ENCODE measurements at regions of chr3 and their contacts with region 1.

Region 1: GRCh38 chr3:56915966-56916586 is 114.3 kb upstream of the ARHGEF3 start:
- DNase-seq: peak; percentile 85
- H3K4me3 ChIP-seq: peak overlapping the region; percentile 73
- H3K27ac ChIP-seq: peak overlapping the region; percentile 97
- H3K4me1 ChIP-seq: peaks cover 66% of the 10 kb centered on the region
- CTCF ChIP-seq: peak; percentile 55

Region 2: GRCh38 chr3:56702490-56703315 is 213.4 kb before region 1 on chr3:
- CTCF ChIA-PET with region 1: no interaction called
- POLR2A ChIA-PET with region 1: interaction called, 10 read pairs
- intact Hi-C with region 1: loop called (anchors 2 kb)
- DNase-seq: peak; percentile 82
- H3K4me3 ChIP-seq: no peak overlapping the region
- H3K27ac ChIP-seq: no peak overlapping the region
- H3K4me1 ChIP-seq: peaks cover 11% of the 10 kb centered on the region
- CTCF ChIP-seq: peak; percentile 98

Region 3: DNA sequence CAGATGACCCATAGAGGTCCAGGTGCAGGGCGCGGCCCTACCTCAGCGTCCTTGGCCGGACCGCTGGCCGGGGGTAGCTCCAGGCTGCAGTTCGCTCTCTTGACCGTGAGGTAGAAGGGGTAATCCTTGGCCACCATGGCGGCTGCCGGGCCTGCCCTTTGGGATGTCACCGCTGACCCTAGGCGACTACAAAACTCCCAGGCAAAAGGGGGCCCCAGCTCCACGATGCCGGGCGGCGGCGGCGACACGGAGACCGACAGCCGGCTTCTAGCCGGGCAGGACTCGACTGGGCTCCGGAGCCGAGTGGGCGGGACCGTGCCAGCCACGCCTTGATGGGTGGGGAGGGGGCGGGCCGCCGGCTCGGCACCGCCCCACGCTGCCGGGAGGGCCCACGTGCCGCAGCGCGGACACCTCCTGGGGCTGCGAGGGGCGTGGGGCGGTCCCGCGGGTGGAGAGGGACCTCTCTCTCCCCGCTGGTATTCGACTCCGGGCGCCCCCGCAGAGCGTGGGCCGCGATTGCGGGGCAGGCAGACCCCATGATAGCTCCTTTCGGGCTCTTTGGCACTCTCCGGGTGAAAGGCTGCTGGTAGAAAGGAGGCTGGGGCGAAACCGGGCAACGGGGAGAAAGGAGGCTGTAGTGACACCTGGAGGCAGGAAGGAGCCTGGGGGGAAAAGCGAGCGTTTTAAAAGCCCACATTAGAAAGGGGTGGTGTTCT is 114.3 kb before region 1 on chr3 and contains the start of gene ARHGEF3:
- CTCF ChIA-PET with region 1: no interaction called
- POLR2A ChIA-PET with region 1: interaction called, 8 read pairs
- intact Hi-C with region 1: loop called (anchors 2 kb)
- DNase-seq: peak; percentile 85
- H3K4me3 ChIP-seq: peak within 1 kb of the TSS; percentile 72
- H3K27ac ChIP-seq: peak within 1 kb of the TSS; percentile 47
- H3K4me1 ChIP-seq: peaks cover 44% of the 10 kb centered on the region
- CTCF ChIP-seq: peak; percentile 85
- total RNA-seq, gene ARHGEF3: 10.8 and 14.1 TPM in 2 replicates

Region 4: GRCh38 chr3:56904552-56905215 is 11.4 kb before region 1 on chr3:
- CTCF ChIA-PET with region 1: interaction called, 3 read pairs
- POLR2A ChIA-PET with region 1: interaction called, 15 read pairs
- intact Hi-C with region 1: no loop called
- DNase-seq: no peak
- H3K4me3 ChIP-seq: no peak overlapping the region
- H3K27ac ChIP-seq: no peak overlapping the region
- H3K4me1 ChIP-seq: no peaks in the 10 kb centered on the region
- CTCF ChIP-seq: no peak

Region 5: DNA sequence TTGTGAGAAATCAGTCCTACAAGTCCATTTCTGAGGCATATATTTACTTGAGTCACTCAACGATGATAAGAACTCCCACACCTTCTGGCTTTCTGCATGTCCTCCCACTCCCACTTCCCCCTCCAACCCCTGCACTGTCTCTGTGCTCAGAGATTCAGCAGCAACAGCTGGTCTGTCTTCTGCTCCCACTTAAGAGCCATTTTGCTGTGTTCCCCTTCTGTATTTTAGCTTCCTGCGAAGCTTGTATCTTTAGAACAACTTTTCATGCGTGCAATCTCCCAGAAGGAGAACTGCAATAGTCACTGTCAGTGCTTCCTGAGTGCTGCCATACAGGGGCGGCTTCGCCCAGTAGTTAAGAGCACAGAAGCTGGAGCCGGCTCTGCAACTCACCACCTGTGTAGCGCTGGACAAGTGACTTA is 54.4 kb after region 1 on chr3:
- CTCF ChIA-PET with region 1: no interaction called
- POLR2A ChIA-PET with region 1: interaction called, 3 read pairs
- intact Hi-C with region 1: loop called (anchors 1 kb)
- DNase-seq: peak; percentile 46
- H3K4me3 ChIP-seq: no peak overlapping the region
- H3K27ac ChIP-seq: peak overlapping the region; percentile 44
- H3K4me1 ChIP-seq: peaks cover 32% of the 10 kb centered on the region
- CTCF ChIP-seq: no peak

Region 6: DNA sequence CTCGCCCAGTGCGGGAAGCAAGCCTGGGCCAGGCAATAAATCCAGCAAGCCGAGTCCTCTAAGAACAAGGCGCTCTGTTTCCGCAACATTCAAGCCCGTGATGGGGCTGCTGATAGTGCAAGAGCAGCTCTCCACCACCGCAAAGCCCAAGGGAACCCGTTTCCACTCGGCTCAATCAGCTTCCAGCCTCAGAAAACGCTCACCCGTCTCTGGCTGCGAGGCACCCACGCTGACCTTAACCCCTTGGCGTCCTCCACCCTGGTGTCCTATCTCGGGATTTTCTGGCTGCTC is 162.2 kb after region 1 on chr3:
- CTCF ChIA-PET with region 1: no interaction called
- POLR2A ChIA-PET with region 1: no interaction called
- intact Hi-C with region 1: loop called (anchors 5 kb)
- DNase-seq: peak; percentile 84
- H3K4me3 ChIP-seq: peak overlapping the region; percentile 98
- H3K27ac ChIP-seq: peak overlapping the region; percentile 48
- H3K4me1 ChIP-seq: peaks cover 60% of the 10 kb centered on the region
- CTCF ChIP-seq: no peak

Region 7: GRCh38 chr3:57089043-57089442 is 173.0 kb after region 1 on chr3:
- CTCF ChIA-PET with region 1: no interaction called
- POLR2A ChIA-PET with region 1: no interaction called
- intact Hi-C with region 1: no loop called
- DNase-seq: no peak
- H3K4me3 ChIP-seq: no peak overlapping the region
- H3K27ac ChIP-seq: no peak overlapping the region
- H3K4me1 ChIP-seq: peaks cover 16% of the 10 kb centered on the region
- CTCF ChIP-seq: no peak

Region 8: DNA sequence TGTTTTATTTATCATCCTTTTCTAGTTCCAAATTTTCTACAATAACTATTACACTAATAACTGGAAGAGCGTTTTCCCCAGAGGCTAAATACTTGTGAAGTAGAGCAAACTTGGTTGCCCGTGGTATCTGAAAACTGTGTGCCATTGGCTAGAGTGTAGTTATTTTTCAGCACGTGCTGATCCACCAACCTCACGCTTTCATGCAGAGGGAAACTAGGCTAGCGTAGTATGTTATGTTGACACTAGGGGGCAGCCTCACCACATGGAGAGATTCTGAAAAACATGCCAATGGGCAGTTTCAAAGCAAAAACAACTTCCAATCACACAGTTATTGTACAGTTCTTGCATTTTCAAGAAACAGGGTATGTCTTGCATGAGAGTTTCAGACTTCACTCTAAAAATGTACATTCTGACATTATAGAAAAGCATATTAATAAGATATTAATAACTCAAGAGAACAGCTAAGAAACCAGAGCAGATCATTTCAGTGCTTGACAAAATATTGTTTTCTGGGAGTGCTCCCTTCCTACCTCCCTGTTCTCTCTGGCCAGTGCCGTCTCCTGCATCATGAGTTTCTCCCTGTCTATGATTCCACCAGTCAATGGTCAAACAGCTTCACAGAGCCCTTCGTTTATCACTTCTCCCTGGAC is 184.1 kb after region 1 on chr3:
- CTCF ChIA-PET with region 1: no interaction called
- POLR2A ChIA-PET with region 1: no interaction called
- intact Hi-C with region 1: no loop called
- DNase-seq: peak; percentile 86
- H3K4me3 ChIP-seq: no peak overlapping the region
- H3K27ac ChIP-seq: no peak overlapping the region
- H3K4me1 ChIP-seq: peaks cover 17% of the 10 kb centered on the region
- CTCF ChIP-seq: peak; percentile 96

Region 9: DNA sequence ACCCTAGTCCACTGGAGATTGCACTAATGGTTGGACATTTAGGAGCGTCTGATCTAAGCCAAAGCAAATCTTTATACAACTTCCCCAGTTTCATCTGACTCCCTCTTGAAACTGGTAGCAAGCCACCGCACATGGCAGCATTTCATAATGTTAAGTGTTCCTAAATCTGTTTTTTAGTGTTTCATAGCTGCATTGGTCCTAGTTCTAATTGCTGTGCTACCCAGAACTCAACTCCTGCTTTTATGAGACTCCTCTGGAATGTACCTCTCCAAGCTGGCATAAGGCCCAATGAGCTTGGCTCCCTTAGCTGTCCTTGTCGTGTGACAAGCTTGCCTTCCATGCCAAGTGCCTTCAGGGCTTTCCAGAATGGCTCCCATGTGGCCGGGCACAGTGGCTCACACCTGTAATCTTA is 1026.8 kb after region 1 on chr3:
- CTCF ChIA-PET with region 1: no interaction called
- POLR2A ChIA-PET with region 1: no interaction called
- intact Hi-C with region 1: no loop called
- DNase-seq: no peak
- H3K4me3 ChIP-seq: no peak overlapping the region
- H3K27ac ChIP-seq: no peak overlapping the region
- H3K4me1 ChIP-seq: no peaks in the 10 kb centered on the region
- CTCF ChIP-seq: no peak

Measured in OCI-LY7 (cell line).